ENCODE measurements at regions of chr6 and their contacts with region 1.

Region 1: GRCh38 chr6:31139599-31139998 is 733 bp upstream of the PSORS1C2 start:
- DNase-seq: no peak
- H3K4me3 ChIP-seq: no peak overlapping the region
- H3K4me3 Mint-ChIP-seq: no peak overlapping the region
- H3K27ac ChIP-seq: no peak overlapping the region
- H3K27ac Mint-ChIP-seq: no peak overlapping the region
- H3K4me1 ChIP-seq: peaks cover 0 to 6% of the 10 kb centered on the region in 2 donors
- H3K4me1 Mint-ChIP-seq: peaks cover 6% of the 10 kb centered on the region
- H3K27me3 ChIP-seq: peaks cover 0 to 3% of the 10 kb centered on the region in 2 donors
- H3K27me3 Mint-ChIP-seq: peaks cover 0 to 13% (median 2%) of the 10 kb centered on the region in 3 donors
- CTCF ChIP-seq: no peak

Region 2: DNA sequence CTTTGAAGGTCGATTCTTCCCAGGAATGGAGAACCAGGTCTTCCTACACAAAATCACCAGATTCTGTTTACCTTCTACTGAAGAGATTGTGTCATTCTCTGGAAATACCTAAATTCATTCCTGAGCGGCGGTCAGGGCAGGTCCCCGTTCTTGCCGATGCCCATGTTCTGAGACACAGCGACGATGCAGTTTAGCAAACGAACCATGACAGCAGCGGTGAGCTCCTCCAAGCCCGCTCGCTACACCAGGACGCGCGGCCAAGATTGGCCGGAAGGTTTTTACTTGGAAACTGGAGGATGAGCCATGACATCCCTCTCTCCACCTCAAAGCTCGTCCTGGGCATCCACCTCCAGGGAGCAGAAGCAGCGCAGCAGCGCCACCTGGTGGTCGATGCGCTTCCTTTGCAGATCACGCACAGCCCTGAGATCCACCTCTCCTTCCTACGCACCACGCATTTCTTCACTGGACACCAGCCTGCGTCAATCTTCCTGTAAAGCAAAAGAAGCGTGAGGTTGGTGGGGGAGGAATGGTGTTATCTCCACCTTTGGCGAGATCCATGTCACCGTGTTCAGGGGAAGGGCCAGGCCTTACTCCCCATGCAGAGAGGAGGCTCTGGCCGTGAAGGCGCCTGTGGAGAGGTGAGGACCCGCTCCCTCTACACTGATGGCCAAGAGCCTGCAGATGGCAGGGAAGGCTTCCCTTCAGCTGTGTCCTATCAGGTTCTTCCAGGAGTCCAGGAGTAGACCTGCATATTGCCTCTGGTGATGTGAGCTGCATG is 227.3 kb after region 1 on chr6:
- intact Hi-C with region 1: loop called (anchors 2 kb)
- DNase-seq: peak; percentile 87 to 88 (median 88)
- H3K4me3 ChIP-seq: peak overlapping the region; percentile 1 to 65 (median 9)
- H3K4me3 Mint-ChIP-seq: peak overlapping the region; percentile 76 to 90
- H3K27ac ChIP-seq: no peak overlapping the region
- H3K27ac Mint-ChIP-seq: peak overlapping the region in 2 of 7 donors; percentile 46 to 61
- H3K4me1 ChIP-seq: peaks cover 22 to 27% of the 10 kb centered on the region in 2 donors
- H3K4me1 Mint-ChIP-seq: peaks cover 28% of the 10 kb centered on the region
- H3K27me3 ChIP-seq: peaks cover 12 to 13% of the 10 kb centered on the region in 2 donors
- H3K27me3 Mint-ChIP-seq: peaks cover 20 to 48% (median 25%) of the 10 kb centered on the region in 3 donors
- CTCF ChIP-seq: peak; percentile 86

Measured in CD14-positive monocyte (primary cell).